ENCODE measurements at regions of chr3 and their contacts with region 1.

Region 1: GRCh38 chr3:151168269-151169094 is 34.5 kb downstream of the GPR171 start:
- DNase-seq: peak; percentile 34 to 81
- H3K4me3 ChIP-seq: no peak overlapping the region
- H3K27ac ChIP-seq: no peak overlapping the region
- H3K4me1 ChIP-seq: peaks cover 0 to 6% (median 0%) of the 10 kb centered on the region in 4 experiments; a peak in 2 of 7 replicates
- H3K27me3 ChIP-seq: no peaks in the 10 kb centered on the region
- CTCF ChIP-seq: peak; percentile 83 to 86 (median 85)
- EP300 ChIP-seq: no peak
- POLR2A ChIP-seq: no peak
- RAD21 ChIP-seq: peak; percentile 84 to 87

Region 2: DNA sequence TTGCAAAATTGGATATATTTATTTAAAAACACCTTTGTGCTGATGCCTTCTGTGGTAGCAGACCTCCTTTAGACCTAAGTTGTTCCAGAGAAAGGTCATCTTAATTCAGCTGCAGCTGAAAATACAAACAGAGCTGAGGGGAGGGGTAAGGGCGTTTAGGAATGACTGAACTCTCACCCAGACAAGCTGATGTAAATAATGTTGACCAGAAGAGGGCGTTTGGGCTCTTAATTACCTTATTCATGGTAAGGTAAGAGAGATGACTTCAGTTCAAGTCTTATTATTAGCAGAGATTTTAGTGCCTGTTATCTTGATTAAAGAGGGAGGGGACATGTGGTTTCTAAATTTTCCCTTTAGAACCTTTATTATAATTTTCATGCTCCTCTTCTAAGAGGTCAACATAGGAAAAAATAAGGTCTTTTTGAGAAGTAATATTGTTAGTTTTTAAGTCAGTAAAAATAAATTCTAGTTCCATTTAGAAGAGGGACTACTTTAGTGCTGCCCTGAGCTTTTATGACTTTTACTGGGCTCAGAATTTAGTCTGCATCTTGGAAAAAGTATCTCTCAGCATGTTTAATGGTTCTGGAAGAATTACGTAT is 11.8 kb before region 1 on chr3:
- CTCF ChIA-PET with region 1: interaction called, 20 read pairs
- POLR2A ChIA-PET with region 1: no interaction called
- DNase-seq: no peak
- H3K4me3 ChIP-seq: no peak overlapping the region
- H3K27ac ChIP-seq: no peak overlapping the region
- H3K4me1 ChIP-seq: peaks cover 0 to 5% (median 3%) of the 10 kb centered on the region in 4 experiments; a peak in 4 of 7 replicates
- H3K27me3 ChIP-seq: no peaks in the 10 kb centered on the region
- CTCF ChIP-seq: peak in 2 of 3 experiments; percentile 40 to 66; a peak in 2 of 4 replicates
- EP300 ChIP-seq: no peak
- POLR2A ChIP-seq: no peak
- RAD21 ChIP-seq: peak; percentile 22 to 31

Region 3: GRCh38 chr3:151197981-151198767 is 29.7 kb after region 1 on chr3:
- CTCF ChIA-PET with region 1: interaction called, 18 read pairs
- POLR2A ChIA-PET with region 1: no interaction called
- DNase-seq: no peak
- H3K4me3 ChIP-seq: no peak overlapping the region
- H3K27ac ChIP-seq: no peak overlapping the region
- H3K4me1 ChIP-seq: no peaks in the 10 kb centered on the region
- H3K27me3 ChIP-seq: no peaks in the 10 kb centered on the region
- CTCF ChIP-seq: no peak
- EP300 ChIP-seq: no peak
- POLR2A ChIP-seq: no peak
- RAD21 ChIP-seq: no peak

Region 4: GRCh38 chr3:151210676-151211381 is 42.3 kb after region 1 on chr3:
- CTCF ChIA-PET with region 1: interaction called, 10 read pairs
- POLR2A ChIA-PET with region 1: no interaction called
- DNase-seq: no peak
- H3K4me3 ChIP-seq: no peak overlapping the region
- H3K27ac ChIP-seq: no peak overlapping the region
- H3K4me1 ChIP-seq: peaks cover 0 to 7% (median 2%) of the 10 kb centered on the region in 4 experiments; a peak in 4 of 7 replicates
- H3K27me3 ChIP-seq: no peaks in the 10 kb centered on the region
- CTCF ChIP-seq: no peak
- EP300 ChIP-seq: no peak
- POLR2A ChIP-seq: no peak
- RAD21 ChIP-seq: no peak

Region 5: DNA sequence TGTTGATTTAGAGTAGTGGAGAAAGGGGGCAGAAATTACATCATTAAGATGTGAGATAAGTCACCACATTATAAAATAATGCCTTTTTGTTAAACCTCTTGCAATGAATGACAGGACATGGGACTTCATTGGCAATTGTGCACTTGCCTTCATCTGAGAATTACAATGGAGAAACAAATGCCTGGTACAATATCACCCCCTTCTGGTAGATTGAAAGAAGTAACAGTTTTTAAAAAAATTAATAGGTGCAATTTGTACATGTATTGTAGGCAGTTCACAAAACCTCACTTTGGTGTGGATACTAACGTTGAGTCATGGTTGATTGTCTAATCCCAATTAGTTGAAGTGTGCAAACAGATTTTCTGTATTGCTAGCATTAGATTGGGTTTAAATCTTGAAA is 114.4 kb after region 1 on chr3:
- CTCF ChIA-PET with region 1: interaction called, 19 read pairs
- POLR2A ChIA-PET with region 1: no interaction called
- DNase-seq: no peak
- H3K4me3 ChIP-seq: no peak overlapping the region
- H3K27ac ChIP-seq: no peak overlapping the region
- H3K4me1 ChIP-seq: no peaks in the 10 kb centered on the region; a peak in 1 of 7 replicates
- H3K27me3 ChIP-seq: no peaks in the 10 kb centered on the region
- CTCF ChIP-seq: peak in 2 of 3 experiments; percentile 53 to 57; a peak in 2 of 4 replicates
- EP300 ChIP-seq: no peak
- POLR2A ChIP-seq: no peak
- RAD21 ChIP-seq: peak; percentile 79

Measured in H1 (cell line).